Activated CD4-positive, alpha-beta T cell treated with anti-CD3 and anti-CD28 coated beads, Interleukin-2, amount 10 ng/mL, durations not matched to agents 7 days and 5 days (primary cell): ENCODE measurements at regions of chr20 and their contacts with region 1.

Region 1: DNA sequence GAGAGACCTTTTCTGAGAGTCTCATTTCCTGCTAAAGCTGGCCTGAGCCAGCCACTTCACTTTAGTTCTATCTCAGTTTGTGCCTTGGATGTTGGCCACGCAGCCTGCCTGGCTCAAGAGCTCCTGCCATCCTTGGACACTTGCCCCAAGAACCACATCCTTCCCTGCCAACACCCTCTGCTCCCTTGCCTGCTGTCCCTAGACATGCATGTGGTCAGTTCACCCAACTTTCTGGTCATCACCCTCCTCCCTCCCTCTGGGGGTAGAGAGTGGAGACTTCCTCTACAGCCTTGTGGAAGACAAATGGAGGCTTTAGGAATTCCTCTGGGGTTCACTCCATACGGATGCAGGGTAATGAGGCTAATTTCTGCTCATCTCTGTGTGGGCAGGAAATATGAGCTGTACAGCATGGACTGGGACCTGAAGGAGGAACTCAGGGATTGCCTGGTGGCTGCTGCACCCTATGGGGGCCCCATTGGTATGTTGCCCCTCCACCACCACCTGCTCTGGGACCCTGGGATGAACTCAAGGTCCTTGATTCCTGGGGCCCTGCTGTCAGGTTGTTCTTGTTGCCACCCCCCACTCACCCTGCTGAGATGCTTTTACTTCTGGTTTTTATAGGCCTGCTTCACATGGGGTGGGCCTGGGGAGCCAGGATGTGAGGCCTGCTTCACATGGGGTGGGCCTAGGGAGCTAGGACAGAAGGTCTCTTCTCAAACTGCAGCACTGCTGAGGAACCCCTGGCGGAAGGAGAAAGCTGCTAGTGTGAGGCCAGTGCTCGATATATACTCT is 13.8 kb upstream of the PTPRA start:
- DNase-seq: no peak
- H3K4me3 Mint-ChIP-seq: no peak overlapping the region
- H3K27ac Mint-ChIP-seq: no peak overlapping the region
- H3K4me1 Mint-ChIP-seq: no peaks in the 10 kb centered on the region
- H3K27me3 Mint-ChIP-seq: no peaks in the 10 kb centered on the region

Region 2: GRCh38 chr20:2822073-2822472 is 37.5 kb before region 1 on chr20:
- CTCF ChIA-PET with region 1: no interaction called
- POLR2A ChIA-PET with region 1: no interaction called
- DNase-seq: peak; percentile 76
- H3K4me3 Mint-ChIP-seq: peak overlapping the region; percentile 36
- H3K27ac Mint-ChIP-seq: peak overlapping the region; percentile 41
- H3K4me1 Mint-ChIP-seq: peaks cover 33% of the 10 kb centered on the region
- H3K27me3 Mint-ChIP-seq: peaks cover 46% of the 10 kb centered on the region

Region 3: GRCh38 chr20:2873010-2873746 is 13.7 kb after region 1 on chr20 and contains the start of gene PTPRA:
- CTCF ChIA-PET with region 1: interaction called, 15 read pairs
- POLR2A ChIA-PET with region 1: no interaction called
- DNase-seq: peak; percentile 94
- H3K4me3 Mint-ChIP-seq: peak within 1 kb of the TSS; percentile 87
- H3K27ac Mint-ChIP-seq: peak within 1 kb of the TSS; percentile 92
- H3K4me1 Mint-ChIP-seq: peaks cover 48% of the 10 kb centered on the region
- H3K27me3 Mint-ChIP-seq: no peaks in the 10 kb centered on the region
- total RNA-seq, gene PTPRA: 66.4 to 83.9 TPM

Region 4: GRCh38 chr20:2914160-2914559 is 54.6 kb after region 1 on chr20:
- CTCF ChIA-PET with region 1: no interaction called
- POLR2A ChIA-PET with region 1: no interaction called
- DNase-seq: no peak
- H3K4me3 Mint-ChIP-seq: no peak overlapping the region
- H3K27ac Mint-ChIP-seq: no peak overlapping the region
- H3K4me1 Mint-ChIP-seq: peaks cover 8% of the 10 kb centered on the region
- H3K27me3 Mint-ChIP-seq: no peaks in the 10 kb centered on the region

Region 5: DNA sequence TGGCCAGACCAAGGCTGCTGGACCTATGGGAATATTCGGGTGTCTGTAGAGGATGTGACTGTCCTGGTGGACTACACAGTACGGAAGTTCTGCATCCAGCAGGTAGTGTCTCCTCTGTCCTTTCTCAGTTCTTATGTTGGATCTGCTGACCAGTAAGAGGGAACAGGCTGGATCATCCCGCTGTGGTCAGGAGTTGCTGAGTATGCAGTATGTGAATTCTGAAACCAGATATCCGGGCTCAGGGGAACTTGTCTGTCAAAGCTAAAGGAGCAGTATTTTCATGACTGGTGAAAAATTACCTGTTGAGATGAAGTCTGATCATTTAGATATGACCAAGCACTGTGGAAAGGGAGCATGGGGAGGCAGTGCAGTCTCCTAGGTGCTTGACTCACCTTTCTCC is 161.8 kb after region 1 on chr20:
- CTCF ChIA-PET with region 1: no interaction called
- POLR2A ChIA-PET with region 1: no interaction called
- DNase-seq: no peak
- H3K4me3 Mint-ChIP-seq: no peak overlapping the region
- H3K27ac Mint-ChIP-seq: no peak overlapping the region
- H3K4me1 Mint-ChIP-seq: peaks cover 2% of the 10 kb centered on the region
- H3K27me3 Mint-ChIP-seq: no peaks in the 10 kb centered on the region